PC-9 (cell line): ENCODE measurements at regions of chr10 and their contacts with region 1.

Region 1: DNA sequence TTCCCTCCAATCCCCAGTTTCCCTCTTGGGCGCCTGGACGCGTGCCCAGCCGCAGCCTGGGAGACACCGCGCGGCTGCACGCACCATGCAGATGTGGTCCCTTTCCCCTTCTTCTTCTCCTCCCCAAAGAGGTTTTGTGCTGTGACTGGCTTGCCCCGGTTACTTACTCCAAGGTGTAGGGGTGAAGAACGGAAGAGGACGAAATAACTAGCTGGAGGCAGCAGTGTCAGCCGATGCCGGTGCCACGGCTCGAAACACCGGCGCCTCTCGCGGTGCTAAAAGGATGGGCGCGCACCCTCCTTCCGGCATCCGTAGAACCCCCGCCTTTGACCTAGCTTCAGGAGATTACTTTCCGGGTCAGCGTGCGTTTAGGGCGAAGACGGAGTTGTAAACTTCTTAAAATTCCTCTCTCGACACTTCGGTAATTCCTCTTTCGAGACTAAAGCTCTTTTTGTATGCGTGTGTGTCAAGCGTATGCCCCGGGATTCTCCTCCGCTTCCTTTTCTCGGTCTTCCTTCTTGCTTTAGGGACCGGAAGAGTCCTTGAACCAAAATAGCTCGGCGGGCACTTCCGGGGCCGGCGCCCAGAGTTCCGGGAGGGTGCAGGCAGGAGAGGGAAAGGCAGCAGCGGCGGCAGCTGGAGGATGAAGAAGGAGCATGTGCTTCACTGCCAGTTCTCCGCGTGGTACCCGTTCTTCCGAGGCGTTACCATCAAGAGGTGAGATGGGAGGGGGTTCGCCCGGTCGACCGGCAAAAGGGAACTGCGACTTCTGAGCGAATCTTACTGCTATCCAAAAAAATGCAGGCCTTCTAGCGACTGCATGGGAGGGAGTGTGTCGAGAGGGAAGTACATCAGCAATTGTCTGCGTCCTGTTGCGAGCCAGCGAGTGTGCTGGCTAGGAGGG is at the starts of genes CDC123 and NUDT5:
- DNase-seq: peak; percentile 77 to 81
- H3K4me3 ChIP-seq: peak within 1 kb of the TSS; percentile 99
- H3K27ac ChIP-seq: peak within 1 kb of the TSS; percentile 74
- H3K4me1 ChIP-seq: peaks cover 25% of the 10 kb centered on the region
- H3K27me3 ChIP-seq: no peaks in the 10 kb centered on the region
- CTCF ChIP-seq: no peak
- total RNA-seq, gene CDC123: 83.5 and 86.0 TPM in 2 replicates
- total RNA-seq, gene NUDT5: 82.0 and 82.6 TPM in 2 replicates

Region 2: DNA sequence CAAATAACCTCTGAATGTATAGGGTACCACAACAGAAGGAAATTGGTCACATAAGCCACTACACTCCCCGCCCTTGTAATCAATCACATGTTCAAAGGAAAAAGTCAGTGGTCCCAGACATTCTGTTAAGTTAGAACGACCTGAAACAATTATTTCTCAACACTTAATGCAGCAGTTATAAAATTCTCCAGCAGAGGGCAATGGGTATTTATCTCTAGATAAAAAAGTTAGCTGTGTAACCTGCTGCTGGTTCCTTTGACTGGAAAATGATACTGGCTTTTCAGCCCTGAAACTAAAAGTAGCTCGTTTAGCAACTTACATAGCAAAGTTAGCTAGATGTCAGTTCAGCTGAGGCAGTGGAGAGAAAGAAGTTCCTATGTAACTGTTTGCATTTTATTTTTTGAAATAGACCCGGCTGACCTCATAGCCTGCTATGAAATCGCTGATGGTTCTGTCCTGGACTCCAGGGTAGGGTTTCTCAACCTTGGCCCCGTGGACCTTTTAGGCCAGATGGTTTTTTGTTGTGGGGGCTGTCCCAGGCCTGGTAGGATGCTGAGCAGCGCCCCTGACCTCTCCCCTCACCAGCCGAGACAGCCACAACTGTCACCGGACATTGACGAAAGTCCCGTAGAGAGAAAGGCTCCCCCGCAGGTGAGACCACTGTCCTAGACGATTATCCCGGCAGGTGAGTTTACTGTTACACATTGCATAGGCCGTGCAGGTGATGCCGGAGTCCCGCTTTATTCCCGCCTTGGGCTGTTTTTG is 412.9 kb before region 1 on chr10:
- CTCF ChIA-PET with region 1: no interaction called
- POLR2A ChIA-PET with region 1: no interaction called
- intact Hi-C with region 1: loop called (anchors 10 kb)
- DNase-seq: peak; percentile 11 to 59
- H3K4me3 ChIP-seq: no peak overlapping the region
- H3K27ac ChIP-seq: no peak overlapping the region
- H3K4me1 ChIP-seq: no peaks in the 10 kb centered on the region
- H3K27me3 ChIP-seq: no peaks in the 10 kb centered on the region
- CTCF ChIP-seq: peak; percentile 84

Region 3: DNA sequence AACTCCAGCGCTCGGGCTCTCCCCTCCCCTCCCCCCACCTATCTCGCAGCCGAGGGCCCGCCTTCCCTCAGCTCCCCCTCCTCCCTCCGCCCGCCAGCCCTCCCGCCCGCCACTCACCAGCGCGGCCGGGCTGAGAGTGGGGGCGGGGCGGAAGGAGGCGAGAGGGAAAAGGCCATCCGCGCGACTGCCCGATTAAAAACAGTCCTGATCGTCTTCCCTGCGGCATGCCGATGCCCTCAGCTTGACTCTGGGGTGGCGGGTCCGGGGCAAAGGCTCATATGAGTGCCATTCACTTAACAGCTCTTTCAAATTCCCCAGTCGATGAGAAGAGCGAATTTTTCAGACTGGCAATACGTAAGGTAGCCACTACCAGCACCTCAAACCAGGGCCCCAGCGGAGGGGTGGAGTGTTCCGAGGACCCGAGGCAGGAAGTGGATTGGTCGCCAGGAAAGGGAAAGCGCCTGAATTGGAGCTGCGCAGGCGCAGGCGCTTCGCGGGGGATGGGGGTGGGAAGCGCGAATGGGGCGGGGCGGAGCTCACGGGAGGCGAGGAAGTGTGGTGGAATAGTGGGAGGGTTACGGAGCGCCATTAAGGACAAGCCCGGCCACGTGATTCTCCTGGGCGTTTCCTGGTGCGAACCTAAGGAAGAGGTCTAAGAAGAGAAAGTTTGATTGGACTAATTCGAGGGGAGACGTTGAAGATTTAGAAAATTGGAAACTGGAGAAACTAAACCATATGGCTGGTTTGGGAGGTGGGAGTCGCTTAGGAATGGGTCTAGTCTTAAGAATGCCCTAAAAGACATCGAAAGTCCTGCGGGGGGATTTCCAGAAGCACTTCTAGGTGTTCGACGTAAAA is 152.8 kb before region 1 on chr10 and contains the start of gene UPF2:
- CTCF ChIA-PET with region 1: no interaction called
- POLR2A ChIA-PET with region 1: interaction called, 4 read pairs
- intact Hi-C with region 1: loop called (anchors 2 kb)
- DNase-seq: peak; percentile 89 to 96
- H3K4me3 ChIP-seq: peak within 1 kb of the TSS; percentile 90
- H3K27ac ChIP-seq: peak within 1 kb of the TSS; percentile 86
- H3K4me1 ChIP-seq: peaks cover 17% of the 10 kb centered on the region
- H3K27me3 ChIP-seq: no peaks in the 10 kb centered on the region
- CTCF ChIP-seq: no peak
- total RNA-seq, gene UPF2: 18.4 and 25.9 TPM in 2 replicates

Region 4: DNA sequence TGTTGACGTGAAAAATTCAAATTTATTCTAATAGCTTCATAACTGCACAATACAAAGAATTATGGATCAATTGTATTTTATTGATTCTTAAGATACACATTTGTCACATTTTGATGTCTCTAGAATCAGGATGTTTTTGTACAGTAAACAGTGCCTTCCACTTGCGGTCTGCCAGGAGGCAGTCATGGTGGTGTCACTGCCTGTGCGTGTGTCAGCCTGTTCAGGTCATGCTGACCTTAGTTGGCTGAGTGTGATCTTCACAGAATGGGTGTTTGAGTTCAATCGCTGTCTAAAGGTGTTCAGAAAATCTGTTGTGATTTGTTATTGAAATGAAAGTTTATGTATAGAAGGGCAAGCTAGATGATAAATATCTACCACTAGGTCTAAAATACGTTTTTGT is 45.7 kb before region 1 on chr10:
- CTCF ChIA-PET with region 1: no interaction called
- POLR2A ChIA-PET with region 1: no interaction called
- intact Hi-C with region 1: no loop called
- DNase-seq: no peak
- H3K4me3 ChIP-seq: no peak overlapping the region
- H3K27ac ChIP-seq: no peak overlapping the region
- H3K4me1 ChIP-seq: no peaks in the 10 kb centered on the region
- H3K27me3 ChIP-seq: no peaks in the 10 kb centered on the region
- CTCF ChIP-seq: no peak

Region 5: DNA sequence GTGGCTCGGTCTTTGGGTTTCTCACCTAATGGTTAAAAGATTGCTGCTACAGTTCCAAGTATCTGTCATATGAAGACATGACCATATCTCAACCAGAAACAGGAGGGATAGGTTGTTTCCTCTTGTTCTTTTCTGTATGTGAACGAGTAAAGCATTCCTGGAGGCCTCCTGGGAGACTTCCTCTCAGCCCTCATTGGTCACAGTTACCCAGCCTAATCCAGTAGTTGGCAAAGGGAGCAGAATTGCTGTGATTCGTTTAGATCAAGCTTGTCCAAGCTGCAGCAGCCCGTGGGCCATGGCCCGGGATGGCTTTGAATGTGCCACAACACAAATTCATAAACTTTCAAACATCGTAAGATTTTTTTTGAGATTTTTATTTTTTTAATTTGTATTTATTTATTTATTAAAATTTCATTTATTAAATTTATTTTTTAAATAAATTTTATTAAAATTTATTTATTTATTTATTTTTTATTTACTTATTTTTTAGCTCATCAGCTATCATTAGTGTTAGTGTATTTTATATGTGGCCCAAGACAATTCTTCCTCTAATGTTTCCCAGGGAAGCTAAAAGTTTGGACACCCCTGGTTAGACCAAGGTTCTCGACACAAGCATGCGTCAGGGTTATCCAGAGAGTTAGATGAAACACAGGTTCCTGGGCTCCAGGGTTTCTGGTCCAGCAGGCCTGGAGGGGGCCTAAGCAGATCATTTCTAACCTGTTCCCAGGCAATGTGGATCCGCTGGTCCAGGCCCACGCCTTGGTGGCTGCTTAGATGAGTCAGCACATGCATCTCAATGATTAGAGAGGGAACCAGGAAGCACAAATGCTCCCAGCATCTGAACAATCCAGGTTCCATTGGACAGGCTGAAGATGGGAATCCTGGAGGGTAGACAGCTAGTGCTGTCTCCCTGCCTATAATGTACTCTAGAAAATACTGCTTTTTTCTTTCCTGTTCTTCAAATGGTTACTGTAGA is 25.8 kb after region 1 on chr10:
- CTCF ChIA-PET with region 1: no interaction called
- POLR2A ChIA-PET with region 1: interaction called, 13 read pairs
- intact Hi-C with region 1: no loop called
- DNase-seq: peak; percentile 33 to 54
- H3K4me3 ChIP-seq: no peak overlapping the region
- H3K27ac ChIP-seq: no peak overlapping the region
- H3K4me1 ChIP-seq: no peaks in the 10 kb centered on the region; the same call in 1 of the 2 replicates
- H3K27me3 ChIP-seq: no peaks in the 10 kb centered on the region
- CTCF ChIP-seq: no peak